Heart right ventricle (tissue), 16 donors: ENCODE measurements at regions of chr10 and their contacts with region 1.

Region 1: GRCh38 chr10:3500408-3500856 is 284.6 kb downstream of the KLF6 start:
- DNase-seq: peak; percentile 58 to 73
- ATAC-seq: peak; percentile 79 to 97 (median 88)
- H3K4me3 ChIP-seq: no peak overlapping the region
- H3K27ac ChIP-seq: peak overlapping the region in 8 of 10 donors; percentile 13 to 61 (median 48)
- H3K4me1 ChIP-seq: peaks cover 0 to 30% (median 4%) of the 10 kb centered on the region in 9 donors
- H3K27me3 ChIP-seq: no peaks in the 10 kb centered on the region
- CTCF ChIP-seq: no peak

Region 2: GRCh38 chr10:3107426-3107961 is 392.9 kb before region 1 on chr10:
- intact Hi-C with region 1: no loop called
- DNase-seq: peak; percentile 68 to 71
- ATAC-seq: peak; percentile 81 to 94 (median 88)
- H3K4me3 ChIP-seq: no peak overlapping the region
- H3K27ac ChIP-seq: peak overlapping the region; percentile 67 to 86 (median 80)
- H3K4me1 ChIP-seq: peaks cover 0 to 75% (median 39%) of the 10 kb centered on the region in 9 donors
- H3K27me3 ChIP-seq: no peaks in the 10 kb centered on the region
- CTCF ChIP-seq: no peak

Region 3: DNA sequence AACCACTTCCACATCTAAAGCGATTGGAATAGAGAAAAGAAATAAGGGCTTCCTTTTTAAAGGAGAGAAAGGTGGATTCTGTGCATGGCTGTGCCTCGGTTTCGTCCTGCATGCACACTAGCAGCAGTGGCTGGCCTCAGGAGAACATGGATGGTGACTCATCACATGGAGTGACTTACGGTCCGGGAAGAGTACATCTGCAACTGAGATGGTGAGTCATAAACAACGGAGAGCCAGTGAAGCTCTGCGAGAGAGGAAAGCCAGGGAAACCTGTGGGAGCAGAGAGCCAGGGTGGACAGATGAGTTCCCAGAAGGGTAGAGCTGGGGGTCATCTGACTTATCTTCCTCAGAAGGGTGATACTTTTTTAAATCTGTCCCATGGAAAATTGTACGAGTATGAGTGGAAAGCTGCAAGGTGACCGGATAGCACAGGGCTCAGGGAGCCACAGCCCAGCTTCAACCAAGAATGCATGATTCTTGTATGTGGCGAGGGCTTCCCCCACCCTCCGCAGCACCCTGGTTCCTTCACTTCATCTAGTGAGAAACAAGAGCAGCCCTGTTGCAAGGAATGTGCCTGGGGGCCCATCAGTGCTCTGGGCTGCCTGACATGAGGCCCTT is 25.5 kb after region 1 on chr10:
- intact Hi-C with region 1: no loop called
- DNase-seq: no peak
- ATAC-seq: peak in 6 of 8 donors; percentile 57 to 86 (median 72)
- H3K4me3 ChIP-seq: no peak overlapping the region
- H3K27ac ChIP-seq: peak overlapping the region in 5 of 10 donors; percentile 62 to 77 (median 71)
- H3K4me1 ChIP-seq: peaks cover 0 to 42% (median 32%) of the 10 kb centered on the region in 9 donors
- H3K27me3 ChIP-seq: no peaks in the 10 kb centered on the region
- CTCF ChIP-seq: no peak

Region 4: DNA sequence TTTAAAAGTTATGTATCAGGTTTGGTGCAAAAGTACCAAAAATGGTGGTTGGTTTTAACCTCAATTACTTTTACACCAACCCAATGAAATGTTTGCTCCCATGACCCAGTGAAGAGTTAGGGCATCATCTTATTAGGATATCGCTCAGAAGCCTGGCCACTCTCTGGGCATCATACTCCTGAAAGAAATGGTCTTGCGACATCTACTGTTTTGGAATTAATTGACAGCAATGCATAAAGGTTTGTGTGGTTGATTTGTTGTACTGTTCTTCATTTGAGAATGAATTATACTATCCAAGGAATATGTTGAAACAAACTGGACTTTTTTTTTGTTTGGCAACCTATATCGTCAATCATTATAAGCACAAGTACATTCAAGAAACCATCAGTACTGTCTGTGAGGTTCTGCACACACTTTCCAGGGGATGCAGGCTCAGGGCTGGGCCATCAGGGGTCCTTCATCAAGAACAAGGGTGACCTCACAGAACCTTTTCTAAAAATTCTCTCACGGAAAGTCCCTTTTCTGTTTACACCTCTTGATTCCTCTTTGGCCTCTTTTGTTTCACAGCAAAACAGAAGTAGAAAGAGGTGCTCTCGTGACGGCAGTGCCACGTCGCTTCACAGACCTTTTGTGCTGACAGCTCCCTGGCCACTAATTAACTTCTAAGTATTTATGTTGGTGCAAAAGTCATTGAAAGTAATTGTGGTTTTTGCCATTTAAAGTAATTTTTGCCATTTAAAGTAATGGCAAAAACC is 401.8 kb after region 1 on chr10:
- intact Hi-C with region 1: loop called in 1 of 10 experiments (anchors 10 kb)
- DNase-seq: no peak
- ATAC-seq: peak; percentile 44 to 80 (median 72)
- H3K4me3 ChIP-seq: no peak overlapping the region
- H3K27ac ChIP-seq: peak overlapping the region in 7 of 10 donors; percentile 25 to 74 (median 44)
- H3K4me1 ChIP-seq: peaks cover 0 to 23% (median 12%) of the 10 kb centered on the region in 9 donors
- H3K27me3 ChIP-seq: no peaks in the 10 kb centered on the region
- CTCF ChIP-seq: peak in 4 of 9 donors; percentile 7 to 32 (median 22)